ENCODE measurements at regions of chr1 and their contacts with region 1.

Region 1: DNA sequence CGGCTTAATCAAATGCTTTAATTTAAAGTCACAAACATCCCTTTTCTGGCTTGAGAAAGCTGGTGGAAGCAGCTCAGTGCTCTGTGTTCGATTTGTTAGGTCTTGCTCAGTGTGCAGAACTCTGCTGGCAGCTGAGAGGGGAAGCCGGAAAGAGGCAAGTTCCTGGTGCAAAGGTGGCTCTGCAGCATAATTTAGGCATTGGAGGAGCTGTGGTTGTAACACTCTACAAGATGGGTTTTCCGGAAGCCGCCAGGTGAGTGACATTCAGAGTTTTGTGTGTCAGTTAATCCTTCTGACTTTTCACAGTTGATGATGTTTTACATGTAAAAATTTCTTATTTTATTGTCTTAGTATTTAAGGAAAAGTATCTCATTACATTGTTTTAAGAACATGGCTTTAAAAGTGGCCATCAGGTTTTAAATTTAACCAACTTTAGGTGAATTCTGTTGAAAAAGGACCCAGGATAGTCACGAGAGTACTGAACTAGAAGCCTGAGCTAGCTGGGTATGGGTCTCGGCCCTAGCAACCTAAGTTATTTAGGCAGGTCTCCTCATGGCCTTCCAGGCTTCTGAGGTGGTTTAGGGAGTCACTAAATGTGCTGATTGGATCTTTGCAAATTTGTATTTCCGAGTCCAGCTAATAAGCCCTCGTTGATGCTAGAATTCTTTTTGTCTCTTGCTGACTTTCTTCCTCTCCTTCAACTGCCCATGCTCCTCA is 47.1 kb upstream of the PODN start:
- DNase-seq: peak; percentile 62 to 95 (median 69)
- ATAC-seq: peak; percentile 100
- H3K4me3 ChIP-seq: peak overlapping the region; percentile 58
- H3K4me3 Mint-ChIP-seq: peak overlapping the region; percentile 88
- H3K27ac ChIP-seq: no peak overlapping the region
- H3K27ac Mint-ChIP-seq: peak overlapping the region; percentile 41
- H3K4me1 ChIP-seq: peaks cover 9% of the 10 kb centered on the region
- H3K4me1 Mint-ChIP-seq: peaks cover 38% of the 10 kb centered on the region
- H3K27me3 ChIP-seq: no peaks in the 10 kb centered on the region
- H3K27me3 Mint-ChIP-seq: no peaks in the 10 kb centered on the region
- CTCF ChIP-seq: no peak

Region 2: GRCh38 chr1:51729156-51729823 is 1285.7 kb before region 1 on chr1:
- CTCF ChIA-PET with region 1: no interaction called
- POLR2A ChIA-PET with region 1: no interaction called
- intact Hi-C with region 1: loop called in 1 of 2 experiments (anchors 5 kb)
- DNase-seq: peak; percentile 84 to 97 (median 90)
- ATAC-seq: peak; percentile 90
- H3K4me3 ChIP-seq: peak overlapping the region; percentile 92
- H3K4me3 Mint-ChIP-seq: peak overlapping the region; percentile 95
- H3K27ac ChIP-seq: peak overlapping the region; percentile 71
- H3K27ac Mint-ChIP-seq: peak overlapping the region; percentile 87
- H3K4me1 ChIP-seq: peaks cover 22% of the 10 kb centered on the region
- H3K4me1 Mint-ChIP-seq: peaks cover 58% of the 10 kb centered on the region
- H3K27me3 ChIP-seq: no peaks in the 10 kb centered on the region
- H3K27me3 Mint-ChIP-seq: no peaks in the 10 kb centered on the region
- CTCF ChIP-seq: no peak

Region 3: GRCh38 chr1:52552505-52553361 is 462.2 kb before region 1 on chr1 and contains the start of gene TUT4:
- CTCF ChIA-PET with region 1: no interaction called
- POLR2A ChIA-PET with region 1: no interaction called
- intact Hi-C with region 1: no loop called
- DNase-seq: peak; percentile 58 to 89 (median 70)
- ATAC-seq: peak; percentile 35
- H3K4me3 ChIP-seq: peak within 1 kb of the TSS; percentile 92
- H3K4me3 Mint-ChIP-seq: peak within 1 kb of the TSS; percentile 84
- H3K27ac ChIP-seq: peak within 1 kb of the TSS; percentile 91 to 94
- H3K27ac Mint-ChIP-seq: peak within 1 kb of the TSS; percentile 90
- H3K4me1 ChIP-seq: peaks cover 18% of the 10 kb centered on the region
- H3K4me1 Mint-ChIP-seq: peaks cover 47% of the 10 kb centered on the region
- H3K27me3 ChIP-seq: no peaks in the 10 kb centered on the region
- H3K27me3 Mint-ChIP-seq: no peaks in the 10 kb centered on the region
- CTCF ChIP-seq: peak; percentile 23
- total RNA-seq, gene TUT4: 141 to 147 TPM

Region 4: DNA sequence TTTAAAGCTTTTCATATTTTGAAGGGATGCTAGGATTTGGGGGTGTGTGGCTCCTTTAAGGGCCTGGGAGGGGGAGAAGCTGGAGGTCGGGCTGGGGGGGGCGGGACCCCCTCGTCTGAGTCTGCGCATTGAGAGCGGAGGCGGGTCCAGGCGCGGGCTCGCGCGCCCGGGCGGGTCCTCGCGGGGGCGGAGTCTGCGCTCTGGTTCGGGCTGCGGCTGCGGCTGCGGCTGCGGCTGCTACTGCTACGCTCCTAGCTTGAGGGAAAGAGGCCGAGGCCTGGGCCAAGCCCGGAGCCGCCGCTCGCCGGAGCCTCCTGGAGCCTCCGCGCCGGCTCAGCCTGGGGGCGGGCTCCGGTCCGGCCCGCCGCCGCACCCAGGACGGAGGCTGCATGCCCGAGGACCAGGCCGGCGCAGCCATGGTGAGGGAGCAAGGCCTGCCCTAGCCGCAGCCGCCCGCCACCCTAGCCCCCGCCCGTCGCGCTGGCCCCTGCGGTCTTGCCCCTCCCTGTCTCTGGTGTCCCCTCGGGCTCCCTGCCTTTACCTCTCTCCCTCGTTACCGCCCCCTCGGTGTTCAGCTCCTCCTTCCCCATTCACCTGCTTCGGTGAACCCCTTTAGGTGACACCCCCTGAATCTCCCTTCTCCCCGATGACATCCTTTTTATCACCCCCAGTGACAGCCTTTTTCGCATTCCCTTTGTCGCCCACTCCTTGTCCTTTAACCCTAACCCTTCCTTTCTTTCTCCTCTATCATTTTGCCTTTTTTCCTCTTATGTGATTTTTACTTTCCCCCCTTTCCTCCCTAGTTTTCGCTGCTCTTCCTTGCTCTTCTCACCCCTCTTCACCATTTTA is 288.5 kb before region 1 on chr1 and contains the start of gene ZYG11B:
- CTCF ChIA-PET with region 1: no interaction called
- POLR2A ChIA-PET with region 1: no interaction called
- intact Hi-C with region 1: loop called in 1 of 2 experiments (anchors 10 kb)
- DNase-seq: peak; percentile 85 to 96 (median 92)
- ATAC-seq: peak; percentile 91
- H3K4me3 ChIP-seq: peak within 1 kb of the TSS; percentile 79
- H3K4me3 Mint-ChIP-seq: peak within 1 kb of the TSS; percentile 95
- H3K27ac ChIP-seq: peak within 1 kb of the TSS in 1 of 2 donors; percentile 45
- H3K27ac Mint-ChIP-seq: peak within 1 kb of the TSS; percentile 77
- H3K4me1 ChIP-seq: peaks cover 36% of the 10 kb centered on the region
- H3K4me1 Mint-ChIP-seq: peaks cover 54% of the 10 kb centered on the region
- H3K27me3 ChIP-seq: no peaks in the 10 kb centered on the region
- H3K27me3 Mint-ChIP-seq: no peaks in the 10 kb centered on the region
- CTCF ChIP-seq: no peak
- total RNA-seq, gene ZYG11B: 14.1 to 16.1 TPM

Region 5: GRCh38 chr1:52887483-52887882 is 127.5 kb before region 1 on chr1:
- CTCF ChIA-PET with region 1: no interaction called
- POLR2A ChIA-PET with region 1: no interaction called
- intact Hi-C with region 1: no loop called
- DNase-seq: no peak
- ATAC-seq: no peak
- H3K4me3 ChIP-seq: no peak overlapping the region
- H3K4me3 Mint-ChIP-seq: no peak overlapping the region
- H3K27ac ChIP-seq: no peak overlapping the region
- H3K27ac Mint-ChIP-seq: no peak overlapping the region
- H3K4me1 ChIP-seq: no peaks in the 10 kb centered on the region
- H3K4me1 Mint-ChIP-seq: no peaks in the 10 kb centered on the region
- H3K27me3 ChIP-seq: no peaks in the 10 kb centered on the region
- H3K27me3 Mint-ChIP-seq: no peaks in the 10 kb centered on the region
- CTCF ChIP-seq: no peak

Region 6: GRCh38 chr1:52920791-52921291 is 94.1 kb before region 1 on chr1:
- CTCF ChIA-PET with region 1: interaction called, 6 read pairs
- POLR2A ChIA-PET with region 1: interaction called, 7 read pairs
- intact Hi-C with region 1: loop called (anchors 2 to 10 kb)
- DNase-seq: peak in 1 of 14 experiments; percentile 30
- ATAC-seq: no peak
- H3K4me3 ChIP-seq: peak overlapping the region; percentile 66
- H3K4me3 Mint-ChIP-seq: peak overlapping the region; percentile 85
- H3K27ac ChIP-seq: peak overlapping the region; percentile 53 to 79
- H3K27ac Mint-ChIP-seq: peak overlapping the region; percentile 70
- H3K4me1 ChIP-seq: peaks cover 28% of the 10 kb centered on the region
- H3K4me1 Mint-ChIP-seq: peaks cover 39% of the 10 kb centered on the region
- H3K27me3 ChIP-seq: no peaks in the 10 kb centered on the region
- H3K27me3 Mint-ChIP-seq: no peaks in the 10 kb centered on the region
- CTCF ChIP-seq: no peak

Region 7: DNA sequence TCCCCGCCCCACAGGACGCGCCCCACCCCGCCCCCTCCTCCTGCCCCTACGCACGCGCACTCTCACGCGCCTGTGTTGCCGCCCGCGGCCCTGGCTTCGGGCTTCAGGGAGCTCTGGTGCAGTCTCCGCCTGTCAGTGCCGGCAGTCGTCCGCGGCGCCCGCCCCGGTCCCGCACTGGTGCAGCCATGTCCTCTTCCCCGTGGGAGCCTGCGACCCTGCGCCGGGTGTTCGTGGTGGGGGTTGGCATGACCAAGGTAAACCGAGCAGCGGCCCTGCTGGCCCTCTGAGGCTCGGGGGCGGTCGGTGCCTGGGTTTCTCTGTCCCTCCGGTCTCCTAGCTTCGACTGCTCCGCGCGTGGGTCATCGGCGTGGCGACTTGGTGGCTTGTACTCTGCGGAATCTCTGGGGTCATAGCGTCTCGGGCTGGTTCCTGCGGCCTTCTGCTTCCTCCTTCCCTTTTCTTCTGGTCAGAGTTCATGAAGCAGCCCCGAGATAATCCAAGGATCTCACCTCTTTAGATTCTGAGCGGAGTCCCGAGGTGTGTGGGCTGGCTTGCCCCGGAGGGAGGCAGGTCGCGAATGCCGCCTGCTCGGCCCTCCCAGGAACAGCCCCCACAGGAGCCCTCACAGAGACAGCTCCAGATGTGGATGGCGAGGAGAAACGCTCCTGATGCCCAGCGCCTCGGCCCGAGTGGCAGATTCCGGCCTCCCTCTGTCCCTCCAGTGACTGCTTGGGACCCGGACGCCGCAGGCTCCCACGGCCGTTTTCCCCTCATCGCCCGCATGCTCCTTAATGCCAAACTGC is 87.5 kb before region 1 on chr1 and contains the start of gene SCP2:
- CTCF ChIA-PET with region 1: interaction called, 6 read pairs
- POLR2A ChIA-PET with region 1: interaction called, 11 read pairs
- intact Hi-C with region 1: loop called in 1 of 2 experiments (anchors 10 kb)
- DNase-seq: peak; percentile 64 to 90 (median 79)
- ATAC-seq: peak; percentile 96
- H3K4me3 ChIP-seq: peak within 1 kb of the TSS; percentile 85
- H3K4me3 Mint-ChIP-seq: peak within 1 kb of the TSS; percentile 81
- H3K27ac ChIP-seq: no peak within 1 kb of the TSS
- H3K27ac Mint-ChIP-seq: peak within 1 kb of the TSS; percentile 38
- H3K4me1 ChIP-seq: peaks cover 23% of the 10 kb centered on the region
- H3K4me1 Mint-ChIP-seq: peaks cover 38% of the 10 kb centered on the region
- H3K27me3 ChIP-seq: no peaks in the 10 kb centered on the region
- H3K27me3 Mint-ChIP-seq: no peaks in the 10 kb centered on the region
- CTCF ChIP-seq: no peak
- total RNA-seq, gene SCP2: 22.7 to 27.0 TPM

Region 8: GRCh38 chr1:53196485-53197270 is 181.7 kb after region 1 on chr1 and contains the start of gene CPT2:
- CTCF ChIA-PET with region 1: no interaction called
- POLR2A ChIA-PET with region 1: no interaction called
- intact Hi-C with region 1: loop called in 1 of 2 experiments (anchors 10 kb)
- DNase-seq: peak; percentile 75 to 96 (median 89)
- ATAC-seq: peak; percentile 92
- H3K4me3 ChIP-seq: peak within 1 kb of the TSS; percentile 92
- H3K4me3 Mint-ChIP-seq: peak within 1 kb of the TSS; percentile 93
- H3K27ac ChIP-seq: peak within 1 kb of the TSS; percentile 93 to 97
- H3K27ac Mint-ChIP-seq: peak within 1 kb of the TSS; percentile 93
- H3K4me1 ChIP-seq: peaks cover 25% of the 10 kb centered on the region
- H3K4me1 Mint-ChIP-seq: peaks cover 29% of the 10 kb centered on the region
- H3K27me3 ChIP-seq: no peaks in the 10 kb centered on the region
- H3K27me3 Mint-ChIP-seq: no peaks in the 10 kb centered on the region
- CTCF ChIP-seq: no peak
- total RNA-seq, gene CPT2: 10.6 to 12.0 TPM

Region 9: GRCh38 chr1:53811414-53811851 is 796.5 kb after region 1 on chr1:
- CTCF ChIA-PET with region 1: no interaction called
- POLR2A ChIA-PET with region 1: no interaction called
- intact Hi-C with region 1: no loop called
- DNase-seq: peak in 5 of 14 experiments; percentile 1 to 15 (median 2)
- ATAC-seq: no peak
- H3K4me3 ChIP-seq: no peak overlapping the region
- H3K4me3 Mint-ChIP-seq: no peak overlapping the region
- H3K27ac ChIP-seq: no peak overlapping the region
- H3K27ac Mint-ChIP-seq: no peak overlapping the region
- H3K4me1 ChIP-seq: no peaks in the 10 kb centered on the region
- H3K4me1 Mint-ChIP-seq: no peaks in the 10 kb centered on the region
- H3K27me3 ChIP-seq: no peaks in the 10 kb centered on the region
- H3K27me3 Mint-ChIP-seq: no peaks in the 10 kb centered on the region
- CTCF ChIP-seq: no peak